MCF 10A (cell line): ENCODE measurements at regions of chr20 and their contacts with region 1.

Region 1: DNA sequence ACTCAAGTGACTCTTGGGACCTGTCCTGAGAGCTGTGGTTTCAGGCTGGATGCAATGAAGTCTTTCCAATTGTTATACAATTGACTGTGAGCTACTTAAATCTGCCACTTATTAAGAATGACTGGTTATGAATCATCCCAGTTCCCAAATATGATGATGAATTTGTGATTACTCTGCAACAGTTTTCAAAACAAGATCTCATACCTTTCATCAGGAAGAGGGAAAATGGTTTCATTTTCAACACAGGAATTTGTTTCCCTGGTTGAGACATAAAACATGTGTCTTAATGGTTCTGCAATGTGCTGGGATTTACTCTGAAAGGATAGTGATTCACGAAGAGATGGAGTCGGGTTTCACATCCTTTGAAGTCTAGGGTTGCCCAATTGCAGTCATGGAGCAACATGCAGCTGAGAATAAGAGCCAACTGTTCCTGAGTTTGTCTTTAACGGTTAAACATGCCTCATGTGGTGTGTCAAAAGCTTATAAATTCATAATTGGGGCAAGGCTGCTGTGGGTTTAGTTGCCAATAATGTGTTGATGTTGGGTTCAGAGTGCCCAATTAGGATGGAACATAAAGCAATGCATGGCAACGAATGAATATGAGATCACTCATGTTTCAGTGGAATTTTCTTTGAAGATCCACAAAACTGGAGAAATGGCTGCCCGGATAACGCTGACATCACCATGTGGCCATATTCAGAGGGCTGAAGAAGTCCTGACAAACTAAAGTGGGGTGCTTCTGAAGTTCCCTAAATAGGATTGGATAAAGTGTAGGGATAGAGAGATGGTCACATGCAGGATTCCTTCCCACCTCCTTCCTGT is 41.0 kb downstream of the CYP24A1 start:
- DNase-seq: peak; percentile 99
- H3K4me3 Mint-ChIP-seq: no peak overlapping the region
- H3K27ac Mint-ChIP-seq: no peak overlapping the region
- H3K4me1 Mint-ChIP-seq: peaks cover 8% of the 10 kb centered on the region
- H3K27me3 Mint-ChIP-seq: no peaks in the 10 kb centered on the region
- CTCF ChIP-seq: no peak

Region 2: DNA sequence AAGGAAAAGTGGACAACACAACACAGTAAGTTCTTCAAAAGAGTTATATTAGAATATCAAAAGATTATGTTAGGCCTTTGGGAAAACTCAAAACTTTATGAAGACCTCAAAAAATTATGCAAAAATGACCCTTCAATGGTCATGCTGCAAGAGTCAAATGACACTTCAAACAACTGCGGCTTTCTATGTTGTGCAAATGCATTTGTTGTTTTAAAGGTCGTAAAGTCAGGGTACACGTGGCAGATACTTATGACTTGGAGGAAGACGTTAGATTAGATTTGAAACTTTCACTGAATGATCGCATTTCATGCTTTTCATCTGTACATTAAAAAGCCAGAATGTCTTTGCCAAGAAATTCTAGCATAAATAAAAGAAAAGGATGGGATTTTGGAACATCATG is 93.9 kb before region 1 on chr20:
- CTCF ChIA-PET with region 1: no interaction called
- POLR2A ChIA-PET with region 1: no interaction called
- intact Hi-C with region 1: no loop called
- DNase-seq: no peak
- H3K4me3 Mint-ChIP-seq: no peak overlapping the region
- H3K27ac Mint-ChIP-seq: no peak overlapping the region
- H3K4me1 Mint-ChIP-seq: peaks cover 1% of the 10 kb centered on the region
- H3K27me3 Mint-ChIP-seq: peaks cover 36% of the 10 kb centered on the region
- CTCF ChIP-seq: no peak

Region 3: GRCh38 chr20:54115151-54115854 is 17.5 kb before region 1 on chr20:
- CTCF ChIA-PET with region 1: interaction called, 14 read pairs
- POLR2A ChIA-PET with region 1: interaction called, 51 read pairs
- intact Hi-C with region 1: no loop called
- DNase-seq: peak; percentile 13
- H3K4me3 Mint-ChIP-seq: no peak overlapping the region
- H3K27ac Mint-ChIP-seq: peak overlapping the region; percentile 81
- H3K4me1 Mint-ChIP-seq: peaks cover 18% of the 10 kb centered on the region
- H3K27me3 Mint-ChIP-seq: no peaks in the 10 kb centered on the region
- CTCF ChIP-seq: no peak

Region 4: GRCh38 chr20:54167909-54168872 is 35.4 kb after region 1 on chr20:
- CTCF ChIA-PET with region 1: interaction called, 4 read pairs
- POLR2A ChIA-PET with region 1: interaction called, 22 read pairs
- intact Hi-C with region 1: no loop called
- DNase-seq: peak; percentile 86
- H3K4me3 Mint-ChIP-seq: peak overlapping the region; percentile 28
- H3K27ac Mint-ChIP-seq: peak overlapping the region; percentile 50
- H3K4me1 Mint-ChIP-seq: peaks cover 18% of the 10 kb centered on the region
- H3K27me3 Mint-ChIP-seq: no peaks in the 10 kb centered on the region
- CTCF ChIP-seq: no peak

Region 5: GRCh38 chr20:54179946-54180345 is 47.1 kb after region 1 on chr20:
- CTCF ChIA-PET with region 1: interaction called, 14 read pairs
- POLR2A ChIA-PET with region 1: interaction called, 78 read pairs
- intact Hi-C with region 1: no loop called
- DNase-seq: peak; percentile 72
- H3K4me3 Mint-ChIP-seq: no peak overlapping the region
- H3K27ac Mint-ChIP-seq: peak overlapping the region; percentile 13
- H3K4me1 Mint-ChIP-seq: peaks cover 30% of the 10 kb centered on the region
- H3K27me3 Mint-ChIP-seq: no peaks in the 10 kb centered on the region
- CTCF ChIP-seq: no peak

Region 6: GRCh38 chr20:54207743-54208547 is 75.1 kb after region 1 on chr20 and contains the start of gene PFDN4:
- CTCF ChIA-PET with region 1: interaction called, 21 read pairs
- POLR2A ChIA-PET with region 1: interaction called, 11 read pairs
- intact Hi-C with region 1: no loop called
- DNase-seq: peak; percentile 85
- H3K4me3 Mint-ChIP-seq: peak within 1 kb of the TSS; percentile 76
- H3K27ac Mint-ChIP-seq: peak within 1 kb of the TSS; percentile 100
- H3K4me1 Mint-ChIP-seq: peaks cover 16% of the 10 kb centered on the region
- H3K27me3 Mint-ChIP-seq: no peaks in the 10 kb centered on the region
- CTCF ChIP-seq: peak; percentile 73
- total RNA-seq, gene PFDN4: 37.0 and 45.4 TPM in 2 replicates